Naive thymus-derived CD4-positive, alpha-beta T cell (primary cell): ENCODE measurements at regions of chr4 and their contacts with region 1.

Region 1: DNA sequence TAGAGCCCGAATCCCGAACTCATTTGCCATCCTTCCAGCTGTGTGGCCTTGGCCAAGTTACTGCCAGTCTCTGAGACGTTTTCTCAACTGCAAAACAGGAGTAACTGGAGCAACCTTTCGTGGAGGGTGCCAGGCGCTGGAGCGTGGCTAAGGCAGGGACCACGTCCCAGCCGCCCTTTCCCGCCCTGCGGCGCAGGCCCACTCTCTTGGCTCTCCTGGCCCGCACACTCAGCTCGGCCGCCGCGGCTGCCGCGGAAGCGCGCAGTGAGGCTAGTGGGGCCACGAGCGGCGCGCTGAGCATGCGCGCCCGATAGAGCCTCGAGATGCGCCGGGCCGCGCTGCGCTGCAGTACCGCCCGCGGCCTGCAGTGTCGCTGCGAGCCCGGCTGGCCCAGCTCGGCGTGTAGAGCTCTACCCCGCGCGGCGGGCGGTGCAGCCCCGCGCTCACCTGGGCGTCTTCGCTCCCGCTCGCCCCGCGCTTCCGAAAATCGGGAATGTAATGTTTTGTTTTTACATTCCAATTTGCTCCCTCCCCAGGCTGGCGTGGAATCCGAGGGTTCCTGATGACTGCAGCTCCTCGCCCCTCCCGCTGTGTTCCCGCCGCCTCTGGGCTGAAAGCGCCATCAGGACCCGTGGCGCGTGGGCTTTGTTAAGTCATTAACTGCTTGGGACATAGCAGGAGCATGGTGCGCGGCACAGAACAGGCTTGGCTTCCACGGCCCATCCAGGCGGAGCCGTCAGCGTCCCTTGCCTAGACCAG is 4.0 kb upstream of the ZNF518B start:
- DNase-seq: peak; percentile 52 to 90 (median 80)
- ATAC-seq: peak; percentile 89
- H3K4me3 ChIP-seq: peak overlapping the region; percentile 61
- H3K4me3 Mint-ChIP-seq: peak overlapping the region; percentile 77 to 92 (median 86)
- H3K27ac ChIP-seq: no peak overlapping the region
- H3K27ac Mint-ChIP-seq: peak overlapping the region in 4 of 9 donors; percentile 3 to 85 (median 45)
- H3K4me1 ChIP-seq: peaks cover 4 to 6% of the 10 kb centered on the region in 2 donors
- H3K4me1 Mint-ChIP-seq: peaks cover 14 to 38% (median 30%) of the 10 kb centered on the region in 7 donors
- H3K27me3 ChIP-seq: no peaks in the 10 kb centered on the region
- H3K27me3 Mint-ChIP-seq: peaks cover 21 to 43% (median 34%) of the 10 kb centered on the region in 5 donors

Region 2: DNA sequence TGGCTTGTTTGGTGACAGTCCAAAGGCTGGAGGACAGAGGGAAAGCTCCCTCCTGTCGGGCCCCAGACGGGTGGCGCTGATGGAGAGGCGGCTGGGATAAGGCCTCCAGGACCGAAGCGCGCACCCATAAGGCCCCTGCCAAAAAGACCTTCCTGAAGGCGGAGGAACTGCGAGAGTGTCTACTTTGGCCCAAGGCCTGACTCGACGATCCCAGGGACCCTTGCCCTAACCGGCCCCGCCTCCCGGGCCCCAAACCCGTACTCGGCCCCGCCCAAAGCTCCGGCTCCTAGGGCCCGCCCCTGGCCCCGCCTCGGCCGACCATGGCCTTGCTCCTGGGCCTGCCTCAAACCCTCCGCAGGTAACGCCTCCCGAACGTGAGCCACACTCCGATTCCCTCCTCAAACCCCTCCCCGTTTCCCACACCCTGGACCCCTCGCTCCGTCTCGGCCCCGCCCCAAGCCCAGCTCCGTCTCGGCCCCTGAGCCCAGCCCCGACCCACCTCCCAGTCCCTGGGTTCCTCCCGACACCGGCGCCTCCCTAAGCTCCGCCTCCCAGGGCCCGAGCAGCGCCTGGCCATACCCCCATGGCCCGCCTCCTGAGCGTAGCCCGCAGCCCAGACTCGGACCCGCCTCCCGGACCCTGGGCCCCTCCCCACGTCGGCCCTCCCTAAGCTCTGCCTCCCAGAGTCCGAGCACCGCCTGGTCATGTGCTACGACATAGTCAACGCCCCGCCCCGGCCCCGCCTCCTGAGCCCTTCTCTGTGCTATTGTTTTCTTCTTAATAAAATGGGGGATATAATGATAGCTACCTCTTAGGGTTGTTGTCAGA is 769.8 kb before region 1 on chr4:
- CTCF ChIA-PET with region 1: interaction called, 3 read pairs
- POLR2A ChIA-PET with region 1: interaction called, 3 read pairs
- intact Hi-C with region 1: loop called (anchors 2 to 5 kb)
- DNase-seq: peak; percentile 80 to 88 (median 86)
- ATAC-seq: peak; percentile 100
- H3K4me3 ChIP-seq: peak overlapping the region; percentile 61
- H3K4me3 Mint-ChIP-seq: peak overlapping the region; percentile 65 to 92 (median 86)
- H3K27ac ChIP-seq: peak overlapping the region; percentile 77
- H3K27ac Mint-ChIP-seq: peak overlapping the region; percentile 79 to 91 (median 83)
- H3K4me1 ChIP-seq: no peaks in the 10 kb centered on the region
- H3K4me1 Mint-ChIP-seq: peaks cover 9 to 26% (median 24%) of the 10 kb centered on the region in 7 donors
- H3K27me3 ChIP-seq: no peaks in the 10 kb centered on the region
- H3K27me3 Mint-ChIP-seq: peaks cover 0 to 9% (median 0%) of the 10 kb centered on the region in 5 donors

Region 3: DNA sequence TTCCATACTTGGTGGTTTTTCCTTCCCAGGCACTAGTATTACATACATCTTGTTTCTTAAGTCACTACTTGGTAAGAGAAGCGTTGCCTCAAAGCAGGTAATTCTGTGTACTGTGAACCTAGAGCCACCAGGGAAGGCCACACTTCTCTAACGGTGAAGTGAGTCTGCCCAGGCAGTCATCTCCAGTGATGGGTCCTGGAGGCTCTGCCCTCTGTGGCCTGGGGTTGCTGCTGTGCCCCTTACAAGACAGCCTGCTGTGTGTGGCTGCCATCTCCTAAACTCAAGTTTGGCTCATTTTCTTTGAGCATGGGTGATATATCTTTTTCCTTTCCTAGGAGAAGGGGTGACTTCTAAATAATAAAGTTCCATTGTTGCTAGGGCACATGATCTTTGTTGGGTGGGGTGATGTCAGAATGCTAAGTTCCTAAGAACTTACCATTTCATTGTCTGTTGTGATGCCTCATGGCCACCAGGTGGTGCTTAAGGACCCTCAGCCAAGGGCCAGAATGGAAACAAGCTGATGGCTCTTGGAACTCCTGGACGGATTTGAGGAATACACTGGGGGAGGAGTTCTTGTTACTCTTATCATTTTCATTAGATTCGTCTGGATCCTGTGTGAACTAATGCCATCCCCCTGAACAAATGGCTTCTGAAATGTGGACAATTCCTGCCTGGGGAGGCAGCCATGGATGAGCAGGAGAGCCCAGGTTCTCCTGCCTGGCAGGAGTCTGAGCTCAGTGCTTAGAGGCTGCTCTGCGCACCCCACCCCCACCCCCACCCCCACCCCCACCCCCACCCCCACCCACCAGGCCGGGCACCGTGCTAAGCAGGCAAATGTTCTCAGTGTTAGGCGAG is 303.6 kb before region 1 on chr4:
- CTCF ChIA-PET with region 1: interaction called, 3 read pairs
- POLR2A ChIA-PET with region 1: interaction called, 3 read pairs
- intact Hi-C with region 1: loop called (anchors 2 kb)
- DNase-seq: peak in 7 of 9 donors; percentile 4 to 37 (median 32)
- ATAC-seq: peak; percentile 63
- H3K4me3 ChIP-seq: no peak overlapping the region
- H3K4me3 Mint-ChIP-seq: peak overlapping the region in 5 of 10 donors; percentile 19 to 48 (median 25)
- H3K27ac ChIP-seq: no peak overlapping the region
- H3K27ac Mint-ChIP-seq: peak overlapping the region in 7 of 9 donors; percentile 12 to 86 (median 60)
- H3K4me1 ChIP-seq: peaks cover 8 to 39% of the 10 kb centered on the region in 2 donors
- H3K4me1 Mint-ChIP-seq: peaks cover 14 to 57% (median 50%) of the 10 kb centered on the region in 7 donors
- H3K27me3 ChIP-seq: no peaks in the 10 kb centered on the region
- H3K27me3 Mint-ChIP-seq: no peaks in the 10 kb centered on the region

Region 4: DNA sequence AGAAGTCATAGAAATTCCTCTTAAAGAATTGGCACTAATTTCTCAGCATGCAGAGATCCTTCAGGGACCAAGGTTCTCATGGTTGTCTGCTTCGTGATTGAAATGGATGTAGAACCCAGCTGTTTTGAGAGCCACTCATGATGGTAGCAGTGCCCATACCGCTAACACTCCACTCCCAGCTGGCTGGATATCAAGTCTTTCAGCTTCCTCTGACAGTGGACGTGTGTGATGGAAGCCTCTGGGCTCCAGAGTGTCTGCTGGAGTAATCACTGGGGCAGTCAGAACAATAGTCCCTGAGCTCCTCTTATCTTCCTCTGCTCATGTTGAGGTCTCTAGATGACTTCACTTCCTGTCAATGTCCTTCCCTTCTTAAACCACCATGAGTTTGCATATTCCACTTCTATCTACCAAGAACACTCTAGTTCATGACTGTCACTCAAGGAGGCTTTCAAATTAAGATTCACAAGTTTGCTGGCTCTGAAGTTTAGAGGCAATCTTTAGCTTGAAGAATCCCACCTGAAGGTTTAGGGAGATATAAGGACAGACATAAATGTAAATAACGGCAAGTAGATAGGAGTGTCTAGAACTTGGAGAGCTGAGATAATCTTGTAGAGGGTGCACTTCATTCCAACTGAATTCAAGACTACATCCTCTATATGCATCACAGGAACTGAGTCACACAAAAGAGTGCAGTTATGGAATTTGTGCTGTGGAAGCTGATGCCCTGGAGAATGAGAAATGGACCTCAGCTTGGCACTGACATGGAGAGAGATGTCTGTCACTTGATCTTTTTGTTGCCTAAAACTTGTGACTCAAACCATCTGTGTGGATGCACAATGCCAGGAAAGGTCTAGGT is 280.1 kb before region 1 on chr4:
- CTCF ChIA-PET with region 1: no interaction called
- POLR2A ChIA-PET with region 1: no interaction called
- intact Hi-C with region 1: loop called in 1 of 2 experiments (anchors 2 kb)
- DNase-seq: peak in 6 of 9 donors; percentile 8 to 45 (median 27)
- ATAC-seq: peak; percentile 82
- H3K4me3 ChIP-seq: no peak overlapping the region
- H3K4me3 Mint-ChIP-seq: peak overlapping the region in 2 of 10 donors; percentile 9 to 53
- H3K27ac ChIP-seq: no peak overlapping the region
- H3K27ac Mint-ChIP-seq: peak overlapping the region in 2 of 9 donors; percentile 40 to 92
- H3K4me1 ChIP-seq: peaks cover 0 to 7% of the 10 kb centered on the region in 2 donors
- H3K4me1 Mint-ChIP-seq: peaks cover 8 to 41% (median 24%) of the 10 kb centered on the region in 7 donors
- H3K27me3 ChIP-seq: no peaks in the 10 kb centered on the region
- H3K27me3 Mint-ChIP-seq: no peaks in the 10 kb centered on the region

Region 5: DNA sequence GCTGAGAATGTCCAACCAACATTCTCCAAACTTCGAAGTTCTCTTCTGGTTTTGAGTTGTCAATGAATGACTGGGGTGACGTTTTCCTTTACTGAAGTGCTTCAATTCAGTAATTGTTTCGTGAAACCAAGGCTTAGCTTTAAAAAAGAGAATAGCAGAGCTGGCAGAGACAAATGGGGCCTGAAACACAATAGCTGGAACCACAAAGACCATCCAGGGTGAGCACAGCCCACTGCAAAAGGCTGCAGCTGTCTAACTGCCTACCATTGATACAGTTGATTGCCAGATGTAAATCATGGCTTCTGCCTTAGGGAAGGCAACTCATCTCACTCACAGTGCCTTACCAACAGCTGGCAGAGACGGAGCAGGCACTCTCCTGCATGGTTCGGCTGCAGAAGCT is 74.6 kb after region 1 on chr4:
- CTCF ChIA-PET with region 1: interaction called, 5 read pairs
- POLR2A ChIA-PET with region 1: no interaction called
- intact Hi-C with region 1: loop called (anchors 1 kb)
- DNase-seq: no peak
- ATAC-seq: no peak
- H3K4me3 ChIP-seq: no peak overlapping the region
- H3K4me3 Mint-ChIP-seq: no peak overlapping the region
- H3K27ac ChIP-seq: no peak overlapping the region
- H3K27ac Mint-ChIP-seq: no peak overlapping the region
- H3K4me1 ChIP-seq: no peaks in the 10 kb centered on the region
- H3K4me1 Mint-ChIP-seq: no peaks in the 10 kb centered on the region
- H3K27me3 ChIP-seq: no peaks in the 10 kb centered on the region
- H3K27me3 Mint-ChIP-seq: peaks cover 0 to 7% (median 4%) of the 10 kb centered on the region in 5 donors

Region 6: DNA sequence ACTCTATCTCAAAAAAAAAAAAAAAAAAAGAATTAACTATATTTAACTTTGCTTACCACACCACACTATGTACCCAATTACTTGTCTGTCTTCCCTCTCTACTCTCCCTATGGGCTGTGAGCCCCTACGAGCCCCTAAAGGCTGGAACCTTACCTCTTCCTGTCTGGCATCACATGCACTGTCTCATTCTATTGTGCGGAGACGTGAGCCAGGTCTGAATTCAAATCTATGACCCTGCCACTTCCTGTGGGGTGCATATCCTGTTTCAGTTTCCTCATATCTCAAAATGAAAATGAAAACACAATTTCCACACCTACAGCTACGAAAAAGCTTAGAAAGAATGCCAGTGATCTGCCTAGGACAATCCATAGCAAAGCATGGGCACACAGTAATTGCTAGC is 1010.3 kb after region 1 on chr4:
- CTCF ChIA-PET with region 1: no interaction called
- POLR2A ChIA-PET with region 1: no interaction called
- intact Hi-C with region 1: loop called (anchors 2 kb)
- DNase-seq: peak; percentile 12 to 82 (median 75)
- ATAC-seq: peak; percentile 96
- H3K4me3 ChIP-seq: peak overlapping the region; percentile 66
- H3K4me3 Mint-ChIP-seq: peak overlapping the region; percentile 71 to 95 (median 90)
- H3K27ac ChIP-seq: peak overlapping the region; percentile 67
- H3K27ac Mint-ChIP-seq: peak overlapping the region; percentile 94 to 99 (median 96)
- H3K4me1 ChIP-seq: peaks cover 14 to 25% of the 10 kb centered on the region in 2 donors
- H3K4me1 Mint-ChIP-seq: peaks cover 28 to 61% (median 45%) of the 10 kb centered on the region in 7 donors
- H3K27me3 ChIP-seq: no peaks in the 10 kb centered on the region
- H3K27me3 Mint-ChIP-seq: peaks cover 0 to under 1% (median 0%) of the 10 kb centered on the region in 5 donors